OCI-LY7 (cell line): ENCODE measurements at regions of chr4 and their contacts with region 1.

Region 1: DNA sequence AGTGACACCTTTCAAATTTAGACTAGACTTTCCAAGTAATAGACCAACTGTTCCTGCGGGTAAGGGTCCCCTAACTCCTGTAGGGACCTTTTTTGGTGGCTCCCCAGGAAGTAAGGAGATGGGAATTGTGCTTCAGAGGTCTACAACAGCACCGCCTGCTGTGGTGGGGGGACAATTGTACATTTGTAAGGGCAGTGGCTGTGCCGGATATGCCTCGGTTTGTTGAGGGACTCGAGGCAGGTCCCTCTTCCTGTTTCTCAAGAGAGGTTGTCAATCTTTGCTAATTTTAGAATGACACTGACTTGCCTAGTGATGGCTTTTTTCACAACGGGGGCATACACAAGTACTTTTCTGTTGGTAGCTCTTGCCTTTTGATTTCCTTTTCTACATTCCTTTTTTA is 15.5 kb upstream of the HSD17B11 start:
- DNase-seq: peak; percentile 37
- H3K4me3 ChIP-seq: no peak overlapping the region
- H3K27ac ChIP-seq: no peak overlapping the region
- H3K4me1 ChIP-seq: peaks cover 7% of the 10 kb centered on the region
- CTCF ChIP-seq: no peak

Region 2: DNA sequence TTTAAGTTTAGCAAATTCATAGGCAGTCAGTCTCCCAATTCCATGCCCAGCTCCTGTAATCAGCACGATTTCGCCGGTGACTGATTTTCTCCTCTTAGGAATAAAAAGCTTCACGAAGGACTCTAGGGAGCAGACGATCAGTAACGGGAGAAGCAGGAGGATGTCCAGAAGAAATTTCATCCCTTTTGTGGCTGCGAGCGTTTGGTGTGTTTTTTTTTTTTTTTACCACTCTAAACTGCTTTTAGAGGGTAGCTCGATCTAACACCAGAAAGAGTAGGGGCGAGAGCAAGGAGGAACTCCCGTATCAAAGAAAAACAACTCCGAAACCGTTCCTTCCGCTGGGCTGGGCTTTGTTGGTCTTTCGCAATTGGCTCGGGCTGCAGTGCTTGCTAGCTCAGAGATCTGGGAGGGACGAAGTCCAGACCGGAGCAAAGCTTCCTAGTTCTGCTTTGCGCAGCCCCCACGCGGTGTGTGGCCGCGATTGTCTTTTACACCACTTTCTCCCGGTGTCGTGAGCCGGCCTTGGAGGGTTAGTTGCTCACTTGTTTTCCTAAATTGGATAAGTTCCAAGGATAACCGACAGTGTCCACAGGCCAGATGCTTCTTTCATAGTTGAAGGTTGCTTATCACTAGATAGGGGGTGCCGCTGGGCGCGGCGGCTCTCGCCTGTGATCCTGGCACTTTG is 15.4 kb before region 1 on chr4 and contains the start of gene HSD17B11:
- CTCF ChIA-PET with region 1: no interaction called
- POLR2A ChIA-PET with region 1: interaction called, 11 read pairs
- intact Hi-C with region 1: no loop called
- DNase-seq: peak; percentile 94
- H3K4me3 ChIP-seq: peak within 1 kb of the TSS; percentile 73
- H3K27ac ChIP-seq: peak within 1 kb of the TSS; percentile 54
- H3K4me1 ChIP-seq: peaks cover 17% of the 10 kb centered on the region
- CTCF ChIP-seq: peak; percentile 56
- total RNA-seq, gene HSD17B11: 4.7 and 9.0 TPM in 2 replicates

Region 3: GRCh38 chr4:87882321-87882720 is 475.9 kb after region 1 on chr4:
- CTCF ChIA-PET with region 1: no interaction called
- POLR2A ChIA-PET with region 1: no interaction called
- intact Hi-C with region 1: no loop called
- DNase-seq: no peak
- H3K4me3 ChIP-seq: no peak overlapping the region
- H3K27ac ChIP-seq: no peak overlapping the region
- H3K4me1 ChIP-seq: peaks cover 20% of the 10 kb centered on the region
- CTCF ChIP-seq: no peak